Activated naive CD4-positive, alpha-beta T cell treated with anti-CD3 and anti-CD28 coated beads for 36 hours (primary cell): ENCODE measurements at regions of chr17 and their contacts with region 1.

Region 1: GRCh38 chr17:63478791-63479494 is 2.1 kb downstream of the ACE start:
- DNase-seq: peak; percentile 87
- H3K4me3 Mint-ChIP-seq: no peak overlapping the region
- H3K27ac Mint-ChIP-seq: no peak overlapping the region
- H3K4me1 Mint-ChIP-seq: peaks cover 5% of the 10 kb centered on the region
- H3K27me3 Mint-ChIP-seq: peaks cover 34% of the 10 kb centered on the region

Region 2: GRCh38 chr17:63419949-63420867 is 58.7 kb before region 1 on chr17:
- CTCF ChIA-PET with region 1: interaction called, 138 read pairs
- intact Hi-C with region 1: loop called (anchors 1 kb)
- DNase-seq: peak; percentile 62
- H3K4me3 Mint-ChIP-seq: no peak overlapping the region
- H3K27ac Mint-ChIP-seq: peak overlapping the region; percentile 27
- H3K4me1 Mint-ChIP-seq: peaks cover 13% of the 10 kb centered on the region
- H3K27me3 Mint-ChIP-seq: no peaks in the 10 kb centered on the region

Region 3: GRCh38 chr17:63445979-63446691 is 32.8 kb before region 1 on chr17 and contains the start of gene CYB561:
- CTCF ChIA-PET with region 1: interaction called, 16 read pairs
- intact Hi-C with region 1: loop called (anchors 2 kb)
- DNase-seq: peak; percentile 66
- H3K4me3 Mint-ChIP-seq: peak within 1 kb of the TSS; percentile 67
- H3K27ac Mint-ChIP-seq: peak within 1 kb of the TSS; percentile 79
- H3K4me1 Mint-ChIP-seq: peaks cover 23% of the 10 kb centered on the region
- H3K27me3 Mint-ChIP-seq: no peaks in the 10 kb centered on the region
- total RNA-seq, gene CYB561: 2.3 to 2.6 TPM

Region 4: DNA sequence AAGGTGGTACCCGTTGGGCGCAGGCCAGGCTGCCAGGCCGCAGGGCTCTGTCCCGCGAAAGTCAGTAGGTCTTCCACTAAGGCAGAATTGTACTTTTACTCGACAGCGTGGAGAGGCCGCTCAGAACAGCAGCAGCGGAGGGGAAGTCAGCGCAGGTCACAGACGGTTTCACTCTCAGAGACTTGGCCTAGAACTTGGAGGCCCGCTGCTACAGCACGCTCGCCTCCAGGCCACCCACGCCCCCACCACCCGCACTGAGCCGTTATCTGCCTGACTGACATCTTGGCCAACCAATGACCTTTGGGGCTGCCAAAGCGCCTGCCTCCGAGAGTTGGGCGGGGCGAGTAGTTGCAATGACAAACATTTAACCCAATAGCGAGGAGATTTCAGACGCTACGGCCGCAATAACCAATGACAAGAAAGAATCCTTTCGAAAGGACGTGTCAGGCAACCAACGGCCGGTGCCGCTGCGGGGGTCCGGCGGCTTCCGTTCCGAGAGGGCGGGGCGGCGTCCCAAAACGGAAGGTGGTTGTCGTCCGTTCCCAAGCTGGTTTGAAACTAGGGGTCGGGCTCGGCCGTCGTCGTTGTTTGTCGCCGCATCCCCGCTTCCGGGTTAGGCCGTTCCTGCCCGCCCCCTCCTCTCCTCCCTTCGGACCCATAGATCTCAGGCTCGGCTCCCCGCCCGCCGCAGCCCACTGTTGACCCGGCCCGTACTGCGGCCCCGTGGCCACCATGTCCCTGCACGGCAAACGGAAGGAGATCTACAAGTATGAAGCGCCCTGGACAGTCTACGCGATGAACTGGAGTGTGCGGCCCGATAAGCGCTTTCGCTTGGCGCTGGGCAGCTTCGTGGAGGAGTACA is 71.2 kb after region 1 on chr17 and contains the start of gene DCAF7:
- CTCF ChIA-PET with region 1: no interaction called
- intact Hi-C with region 1: no loop called
- DNase-seq: peak; percentile 100
- H3K4me3 Mint-ChIP-seq: peak within 1 kb of the TSS; percentile 82
- H3K27ac Mint-ChIP-seq: peak within 1 kb of the TSS; percentile 94
- H3K4me1 Mint-ChIP-seq: peaks cover 33% of the 10 kb centered on the region
- H3K27me3 Mint-ChIP-seq: no peaks in the 10 kb centered on the region
- total RNA-seq, gene DCAF7: 102 to 103 TPM